ENCODE measurements at regions of chr6 and their contacts with region 1.

Region 1: DNA sequence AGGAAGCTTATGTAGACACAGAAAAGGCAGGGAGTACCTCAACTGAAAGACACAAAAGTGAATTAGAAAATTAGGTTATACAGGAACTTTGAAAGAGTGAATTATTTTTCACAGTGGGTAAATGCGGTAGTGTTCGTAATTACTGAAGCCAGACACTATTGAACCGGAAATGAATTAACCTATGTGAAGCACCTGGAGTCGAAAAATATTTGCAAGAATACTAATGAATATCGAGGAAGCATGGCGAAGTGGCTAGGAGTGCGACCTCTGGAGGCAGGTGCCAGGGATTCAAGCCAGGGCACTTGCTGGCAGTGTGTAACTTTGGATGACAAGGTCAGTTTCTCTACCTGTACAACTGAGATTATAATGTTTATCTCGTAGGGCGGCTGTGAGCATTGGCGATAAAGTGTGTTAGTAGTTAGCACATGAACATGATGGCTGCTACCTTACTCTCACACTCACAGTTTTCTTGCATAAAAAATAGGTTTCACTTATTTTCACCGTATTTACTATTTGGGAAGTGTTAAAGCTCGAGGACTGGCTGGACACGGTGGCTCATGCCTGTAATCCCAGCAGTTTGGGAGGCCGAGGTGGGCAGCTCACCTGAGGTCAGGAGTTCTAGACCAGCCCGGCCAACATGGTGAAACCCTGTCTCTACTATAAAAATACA is 567 bp upstream of the SLC18B1 start:
- DNase-seq: peak; percentile 67 to 75 (median 67)
- H3K4me3 ChIP-seq: peak overlapping the region; percentile 63
- H3K4me3 Mint-ChIP-seq: no peak overlapping the region
- H3K27ac ChIP-seq: no peak overlapping the region
- H3K27ac Mint-ChIP-seq: no peak overlapping the region
- H3K4me1 ChIP-seq: peaks cover 12% of the 10 kb centered on the region
- H3K4me1 Mint-ChIP-seq: peaks cover 19 to 43% (median 30%) of the 10 kb centered on the region in 4 donors
- H3K27me3 ChIP-seq: no peaks in the 10 kb centered on the region
- H3K27me3 Mint-ChIP-seq: no peaks in the 10 kb centered on the region

Region 2: DNA sequence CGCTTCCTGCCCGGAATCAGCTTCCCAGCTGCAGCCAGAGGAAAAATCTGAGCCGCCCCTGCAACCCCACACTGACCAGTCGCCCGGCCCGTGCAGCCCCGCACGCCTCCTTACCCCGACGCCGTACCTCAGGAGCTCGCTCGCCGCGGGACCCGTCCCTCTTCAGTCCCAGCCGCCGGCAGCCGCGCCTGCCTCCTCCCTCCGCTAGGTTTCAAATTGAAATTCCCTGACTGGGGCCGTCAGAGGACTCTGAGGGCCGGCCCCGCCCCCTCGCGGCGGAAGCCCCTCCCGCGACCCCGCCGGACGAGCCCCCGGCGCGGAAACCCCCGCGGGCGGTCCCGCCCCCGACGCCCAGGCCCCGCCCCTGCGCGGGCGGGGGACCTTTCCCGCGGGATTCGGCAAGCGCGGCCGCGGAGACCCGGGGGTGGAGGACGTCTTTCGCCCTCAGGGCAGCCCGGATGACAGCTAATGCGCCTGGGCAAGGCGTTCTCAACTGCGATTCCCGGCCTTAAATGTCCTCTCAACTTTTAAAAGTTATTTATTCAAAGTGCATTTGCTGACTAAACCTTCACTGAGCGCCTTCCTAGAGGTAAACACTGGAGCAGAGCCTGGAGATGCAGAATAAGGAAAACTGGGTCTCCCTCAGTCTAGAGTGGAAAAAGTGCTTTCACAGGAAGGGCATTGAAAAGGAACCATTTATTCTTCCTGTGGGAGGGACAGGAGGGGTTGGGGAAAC is 1735.8 kb before region 1 on chr6 and contains the start of gene EPB41L2:
- CTCF ChIA-PET with region 1: no interaction called
- POLR2A ChIA-PET with region 1: no interaction called
- intact Hi-C with region 1: no loop called
- DNase-seq: peak; percentile 76 to 81 (median 78)
- H3K4me3 ChIP-seq: peak within 1 kb of the TSS; percentile 54 to 59
- H3K4me3 Mint-ChIP-seq: peak within 1 kb of the TSS; percentile 82 to 88 (median 86)
- H3K27ac ChIP-seq: peak within 1 kb of the TSS; percentile 38
- H3K27ac Mint-ChIP-seq: peak within 1 kb of the TSS; percentile 12 to 92 (median 81)
- H3K4me1 ChIP-seq: peaks cover 15% of the 10 kb centered on the region
- H3K4me1 Mint-ChIP-seq: peaks cover 18 to 36% (median 25%) of the 10 kb centered on the region in 4 donors
- H3K27me3 ChIP-seq: no peaks in the 10 kb centered on the region
- H3K27me3 Mint-ChIP-seq: no peaks in the 10 kb centered on the region
- total RNA-seq, gene EPB41L2: 18.4 to 24.3 TPM

Region 3: DNA sequence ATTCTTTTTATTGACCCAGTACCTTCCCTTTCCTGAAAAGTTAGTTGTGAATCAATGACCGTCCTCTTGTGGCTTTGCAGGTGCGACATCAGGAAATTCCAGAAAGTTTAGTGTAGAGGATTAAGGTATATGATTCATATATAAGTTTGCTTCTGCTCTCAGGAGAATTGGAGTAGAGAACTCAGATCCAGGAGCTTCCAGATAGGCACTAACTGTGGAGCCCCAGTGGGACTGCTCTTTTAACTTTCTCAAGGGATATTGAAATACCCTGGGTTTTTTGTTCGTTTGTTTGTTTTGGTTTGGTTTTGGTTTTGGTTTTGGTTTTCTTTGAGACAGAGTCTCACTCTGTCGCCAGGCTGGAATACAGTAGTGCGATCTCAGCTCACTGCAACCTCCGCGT is 184.4 kb before region 1 on chr6:
- CTCF ChIA-PET with region 1: no interaction called
- POLR2A ChIA-PET with region 1: no interaction called
- intact Hi-C with region 1: no loop called
- DNase-seq: peak in 1 of 5 donors; percentile 3
- H3K4me3 ChIP-seq: no peak overlapping the region
- H3K4me3 Mint-ChIP-seq: peak overlapping the region; percentile 36 to 80 (median 68)
- H3K27ac ChIP-seq: no peak overlapping the region
- H3K27ac Mint-ChIP-seq: peak overlapping the region in 3 of 7 donors; percentile 16 to 74 (median 37)
- H3K4me1 ChIP-seq: no peaks in the 10 kb centered on the region
- H3K4me1 Mint-ChIP-seq: peaks cover 0 to 19% (median 6%) of the 10 kb centered on the region in 4 donors
- H3K27me3 ChIP-seq: no peaks in the 10 kb centered on the region
- H3K27me3 Mint-ChIP-seq: peaks cover 8 to 10% of the 10 kb centered on the region in 2 donors

Region 4: GRCh38 chr6:132669690-132670291 is 129.2 kb before region 1 on chr6:
- CTCF ChIA-PET with region 1: interaction called, 45 read pairs
- POLR2A ChIA-PET with region 1: no interaction called
- intact Hi-C with region 1: loop called (anchors 1 kb)
- DNase-seq: peak in 4 of 5 donors; percentile 22 to 39 (median 36)
- H3K4me3 ChIP-seq: no peak overlapping the region
- H3K4me3 Mint-ChIP-seq: no peak overlapping the region
- H3K27ac ChIP-seq: no peak overlapping the region
- H3K27ac Mint-ChIP-seq: no peak overlapping the region
- H3K4me1 ChIP-seq: peaks cover 4% of the 10 kb centered on the region
- H3K4me1 Mint-ChIP-seq: peaks cover 0 to 4% (median 3%) of the 10 kb centered on the region in 4 donors
- H3K27me3 ChIP-seq: no peaks in the 10 kb centered on the region
- H3K27me3 Mint-ChIP-seq: peaks cover 2 to 6% of the 10 kb centered on the region in 2 donors

Region 5: DNA sequence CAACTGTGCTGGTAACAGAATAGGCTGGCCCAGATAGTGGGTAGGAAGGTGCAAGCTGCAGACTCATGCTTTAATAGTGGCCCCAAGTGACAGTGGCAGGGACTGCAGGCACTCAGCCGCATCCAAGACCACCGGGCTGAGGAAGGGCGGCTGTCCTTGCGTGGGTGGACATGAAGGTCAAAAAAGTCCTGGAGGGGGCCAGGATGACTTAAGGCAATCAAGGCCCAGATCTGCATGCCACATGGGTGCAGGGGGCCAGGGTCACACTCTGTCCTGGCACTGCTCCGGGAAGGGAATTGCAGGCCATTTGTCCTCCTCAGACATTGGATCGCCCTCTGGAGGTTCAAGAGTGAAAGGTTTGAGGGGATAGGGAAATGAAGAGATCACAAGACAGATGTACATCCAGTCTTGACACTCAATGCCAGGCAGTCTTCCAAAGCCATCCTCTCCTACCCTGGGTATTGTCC is 30.9 kb before region 1 on chr6:
- CTCF ChIA-PET with region 1: interaction called, 31 read pairs
- POLR2A ChIA-PET with region 1: interaction called, 9 read pairs
- intact Hi-C with region 1: loop called (anchors 1 kb)
- DNase-seq: no peak
- H3K4me3 ChIP-seq: no peak overlapping the region
- H3K4me3 Mint-ChIP-seq: no peak overlapping the region
- H3K27ac ChIP-seq: no peak overlapping the region
- H3K27ac Mint-ChIP-seq: peak overlapping the region in 1 of 7 donors; percentile 58
- H3K4me1 ChIP-seq: peaks cover 9% of the 10 kb centered on the region
- H3K4me1 Mint-ChIP-seq: peaks cover 8 to 14% (median 11%) of the 10 kb centered on the region in 4 donors
- H3K27me3 ChIP-seq: no peaks in the 10 kb centered on the region
- H3K27me3 Mint-ChIP-seq: peaks cover 0 to 1% of the 10 kb centered on the region in 2 donors

Region 6: DNA sequence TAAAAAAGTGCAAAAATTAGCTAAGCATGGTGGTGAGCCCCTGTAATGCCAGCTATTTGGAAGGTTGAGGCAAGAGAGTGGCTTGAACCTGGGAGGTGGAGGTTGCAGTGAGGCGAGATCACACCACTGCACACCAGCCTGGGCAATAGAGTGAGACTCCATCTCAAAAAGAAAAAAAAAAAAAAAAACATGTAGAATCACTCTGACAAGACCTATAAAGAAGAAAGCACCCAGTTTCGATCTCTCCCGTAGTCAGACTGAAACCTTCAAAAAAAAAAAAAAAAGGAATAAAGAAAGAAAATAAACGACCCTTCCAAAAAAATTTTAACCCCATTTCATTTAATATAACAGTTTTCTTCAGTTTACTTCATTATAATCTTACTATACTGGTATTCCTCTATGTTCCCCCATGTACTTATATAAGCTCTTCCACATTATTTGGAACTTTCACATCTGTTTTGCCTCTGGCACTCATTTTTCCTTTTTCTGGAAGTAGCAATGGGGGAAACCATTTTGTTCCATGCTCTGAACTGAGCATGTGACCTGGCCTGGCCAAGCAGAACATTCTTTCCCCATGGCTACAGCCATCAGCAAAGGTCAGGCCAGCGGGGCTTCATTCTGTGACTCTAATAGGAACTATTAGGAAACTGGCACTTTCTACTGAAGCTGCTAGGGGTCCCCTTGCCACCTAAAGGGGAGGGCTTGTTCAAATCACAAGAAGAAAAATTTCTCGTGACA is 10.2 kb before region 1 on chr6:
- CTCF ChIA-PET with region 1: interaction called, 28 read pairs
- POLR2A ChIA-PET with region 1: interaction called, 5 read pairs
- intact Hi-C with region 1: no loop called
- DNase-seq: no peak
- H3K4me3 ChIP-seq: no peak overlapping the region
- H3K4me3 Mint-ChIP-seq: no peak overlapping the region
- H3K27ac ChIP-seq: no peak overlapping the region
- H3K27ac Mint-ChIP-seq: peak overlapping the region in 2 of 7 donors; percentile 10 to 63
- H3K4me1 ChIP-seq: peaks cover 11% of the 10 kb centered on the region
- H3K4me1 Mint-ChIP-seq: peaks cover 9 to 18% (median 14%) of the 10 kb centered on the region in 4 donors
- H3K27me3 ChIP-seq: no peaks in the 10 kb centered on the region
- H3K27me3 Mint-ChIP-seq: no peaks in the 10 kb centered on the region

Region 7: GRCh38 chr6:132820629-132821381 is 21.8 kb after region 1 on chr6:
- CTCF ChIA-PET with region 1: interaction called, 23 read pairs
- POLR2A ChIA-PET with region 1: interaction called, 180 read pairs
- intact Hi-C with region 1: no loop called
- DNase-seq: no peak
- H3K4me3 ChIP-seq: no peak overlapping the region
- H3K4me3 Mint-ChIP-seq: no peak overlapping the region
- H3K27ac ChIP-seq: no peak overlapping the region
- H3K27ac Mint-ChIP-seq: peak overlapping the region; percentile 48 to 99 (median 73)
- H3K4me1 ChIP-seq: peaks cover 32% of the 10 kb centered on the region
- H3K4me1 Mint-ChIP-seq: peaks cover 35 to 66% (median 51%) of the 10 kb centered on the region in 4 donors
- H3K27me3 ChIP-seq: no peaks in the 10 kb centered on the region
- H3K27me3 Mint-ChIP-seq: no peaks in the 10 kb centered on the region

Region 8: DNA sequence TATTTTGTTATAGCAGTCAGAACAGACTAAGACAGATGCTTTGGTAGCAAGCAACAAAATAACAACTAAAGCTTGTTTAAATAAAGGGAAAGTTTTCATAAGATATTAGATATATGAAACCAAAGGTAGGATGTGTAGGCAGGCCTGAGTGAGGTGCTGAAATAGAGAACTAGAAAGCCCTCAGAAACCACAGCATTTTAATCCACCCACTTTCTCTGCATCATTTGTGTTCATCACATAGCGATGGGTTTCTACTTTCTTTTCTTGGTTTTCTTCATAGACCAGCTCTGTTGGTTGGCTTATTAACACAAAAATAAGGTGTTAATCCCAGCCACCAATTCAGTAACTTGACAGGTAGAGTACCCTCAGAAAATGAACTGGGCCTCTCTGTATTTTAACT is 73.9 kb after region 1 on chr6:
- CTCF ChIA-PET with region 1: no interaction called
- POLR2A ChIA-PET with region 1: no interaction called
- intact Hi-C with region 1: no loop called
- DNase-seq: no peak
- H3K4me3 ChIP-seq: no peak overlapping the region
- H3K4me3 Mint-ChIP-seq: no peak overlapping the region
- H3K27ac ChIP-seq: no peak overlapping the region
- H3K27ac Mint-ChIP-seq: no peak overlapping the region
- H3K4me1 ChIP-seq: no peaks in the 10 kb centered on the region
- H3K4me1 Mint-ChIP-seq: no peaks in the 10 kb centered on the region
- H3K27me3 ChIP-seq: no peaks in the 10 kb centered on the region
- H3K27me3 Mint-ChIP-seq: peaks cover under 1 to 4% of the 10 kb centered on the region in 2 donors

Measured in CD4-positive, alpha-beta memory T cell (primary cell).